MCF 10A (cell line): ENCODE measurements at regions of chr2 and their contacts with region 1.

Region 1: DNA sequence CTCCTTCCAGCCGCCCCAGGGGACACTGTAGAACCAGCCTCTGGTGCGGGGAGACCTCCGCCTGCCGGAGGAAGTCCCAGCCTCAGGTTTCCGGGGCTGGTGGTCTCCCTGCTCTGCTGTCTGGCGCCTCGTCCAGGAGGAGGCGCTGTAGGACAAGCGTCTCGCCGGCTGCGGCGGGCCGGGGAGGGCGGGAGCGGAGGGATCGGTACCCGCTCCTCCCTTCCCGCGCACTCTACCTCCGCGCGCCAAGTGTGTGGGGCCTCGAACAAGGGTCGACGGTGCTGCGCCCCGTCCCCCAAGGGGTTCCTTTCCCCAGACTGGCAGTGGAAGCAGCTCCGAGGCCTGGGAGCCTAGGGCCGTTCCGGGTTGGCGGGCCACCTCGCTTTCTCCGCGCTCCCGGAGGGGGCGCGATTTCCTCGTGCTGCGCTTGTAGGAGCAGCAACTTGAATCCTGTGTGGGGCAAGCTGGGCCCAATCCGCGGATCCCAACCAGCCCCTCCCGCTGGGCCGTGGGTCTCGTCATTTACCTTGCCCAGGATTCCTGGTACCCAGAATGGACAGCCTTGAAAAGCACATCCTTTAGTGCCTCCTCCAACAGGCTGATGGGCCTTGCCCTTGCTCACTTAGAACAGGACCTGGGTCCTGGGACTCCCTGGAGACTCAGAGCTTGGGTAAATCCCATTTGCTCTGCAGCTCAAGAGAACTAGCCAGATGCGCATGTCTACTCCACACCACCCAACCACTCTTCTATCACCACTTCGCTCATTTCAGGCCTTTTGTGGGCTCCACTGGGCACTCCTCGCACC is 10.6 kb upstream of the HOXD4 start:
- DNase-seq: peak; percentile 73
- H3K4me3 Mint-ChIP-seq: peak overlapping the region; percentile 57
- H3K27ac Mint-ChIP-seq: no peak overlapping the region
- H3K4me1 Mint-ChIP-seq: no peaks in the 10 kb centered on the region
- H3K27me3 Mint-ChIP-seq: no peaks in the 10 kb centered on the region
- CTCF ChIP-seq: peak; percentile 96

Region 2: GRCh38 chr2:175647058-175647457 is 493.7 kb before region 1 on chr2:
- CTCF ChIA-PET with region 1: no interaction called
- POLR2A ChIA-PET with region 1: no interaction called
- intact Hi-C with region 1: no loop called
- DNase-seq: no peak
- H3K4me3 Mint-ChIP-seq: no peak overlapping the region
- H3K27ac Mint-ChIP-seq: no peak overlapping the region
- H3K4me1 Mint-ChIP-seq: no peaks in the 10 kb centered on the region
- H3K27me3 Mint-ChIP-seq: no peaks in the 10 kb centered on the region
- CTCF ChIP-seq: no peak

Region 3: GRCh38 chr2:176001916-176002687 is 138.6 kb before region 1 on chr2 and contains the start of gene LNPK:
- CTCF ChIA-PET with region 1: no interaction called
- POLR2A ChIA-PET with region 1: no interaction called
- intact Hi-C with region 1: no loop called
- DNase-seq: peak; percentile 91
- H3K4me3 Mint-ChIP-seq: peak within 1 kb of the TSS; percentile 78
- H3K27ac Mint-ChIP-seq: peak within 1 kb of the TSS; percentile 53
- H3K4me1 Mint-ChIP-seq: peaks cover 9% of the 10 kb centered on the region
- H3K27me3 Mint-ChIP-seq: no peaks in the 10 kb centered on the region
- CTCF ChIP-seq: no peak
- total RNA-seq, gene LNPK: 21.8 and 23.3 TPM in 2 replicates

Region 4: GRCh38 chr2:176107731-176108181 is 33.0 kb before region 1 on chr2:
- CTCF ChIA-PET with region 1: no interaction called
- POLR2A ChIA-PET with region 1: no interaction called
- intact Hi-C with region 1: no loop called
- DNase-seq: no peak
- H3K4me3 Mint-ChIP-seq: no peak overlapping the region
- H3K27ac Mint-ChIP-seq: no peak overlapping the region
- H3K4me1 Mint-ChIP-seq: peaks cover 7% of the 10 kb centered on the region
- H3K27me3 Mint-ChIP-seq: peaks cover 22% of the 10 kb centered on the region
- CTCF ChIP-seq: no peak

Region 5: DNA sequence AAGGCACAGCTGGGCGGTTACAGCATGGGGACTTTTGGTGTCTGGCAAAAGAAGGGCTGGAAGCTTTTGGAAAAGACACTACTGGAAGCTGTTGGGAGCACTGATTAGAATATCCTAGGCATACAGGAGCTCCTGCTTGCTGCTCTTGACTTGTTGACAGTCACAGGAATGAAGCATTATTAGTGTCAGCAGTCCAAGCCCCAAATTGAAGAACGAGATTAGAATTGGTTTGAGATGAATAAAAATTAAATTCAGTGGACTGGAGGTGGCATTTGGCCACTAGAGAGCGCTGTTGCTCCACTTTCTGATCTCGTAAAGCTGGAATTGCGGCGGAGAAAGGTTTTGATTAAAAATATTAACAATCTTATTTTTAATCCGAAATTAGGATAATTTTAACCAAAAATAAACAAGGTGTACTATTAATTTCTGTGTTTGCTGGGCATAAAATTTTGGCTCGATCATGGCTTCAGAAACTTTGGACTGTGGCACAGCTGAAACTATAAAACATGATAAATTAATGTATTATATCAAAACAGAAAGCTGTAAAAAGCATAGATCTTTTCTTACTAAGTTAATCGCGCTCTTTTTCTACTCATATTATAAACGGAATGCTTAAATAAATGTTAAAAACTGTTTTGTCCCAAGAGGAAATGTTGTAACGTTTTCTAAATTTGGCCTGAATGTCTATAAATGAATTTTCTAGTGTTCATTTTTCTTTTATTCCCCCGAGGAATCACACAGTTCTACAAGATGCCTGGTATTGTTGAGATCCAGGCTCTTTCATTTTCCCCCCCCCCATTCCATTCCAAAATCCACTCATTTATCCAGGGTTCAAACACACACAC is 13.6 kb before region 1 on chr2:
- CTCF ChIA-PET with region 1: interaction called, 25 read pairs
- POLR2A ChIA-PET with region 1: no interaction called
- intact Hi-C with region 1: no loop called
- DNase-seq: peak; percentile 63
- H3K4me3 Mint-ChIP-seq: no peak overlapping the region
- H3K27ac Mint-ChIP-seq: no peak overlapping the region
- H3K4me1 Mint-ChIP-seq: no peaks in the 10 kb centered on the region
- H3K27me3 Mint-ChIP-seq: peaks cover 11% of the 10 kb centered on the region
- CTCF ChIP-seq: peak; percentile 76

Region 6: DNA sequence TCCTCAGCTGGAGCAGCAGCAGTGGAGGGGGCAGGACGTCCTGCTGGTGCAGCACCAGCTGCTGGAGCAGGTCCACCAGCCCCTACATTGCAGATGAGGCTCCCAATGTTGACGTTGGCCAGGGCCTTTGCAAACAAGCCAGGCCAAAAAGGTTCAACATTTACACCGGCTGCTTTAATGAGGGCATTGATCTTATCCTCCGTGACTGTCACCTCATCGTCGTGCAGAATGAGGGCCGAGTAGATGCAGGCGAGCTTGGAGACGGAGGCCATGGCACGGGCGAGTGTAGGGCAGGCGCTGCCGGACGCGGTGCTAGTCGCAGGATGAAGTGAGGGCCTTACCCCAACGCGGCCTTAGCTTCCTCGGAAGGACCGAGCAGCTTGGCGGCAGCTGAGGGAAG is 60.3 kb after region 1 on chr2:
- CTCF ChIA-PET with region 1: no interaction called
- POLR2A ChIA-PET with region 1: no interaction called
- intact Hi-C with region 1: no loop called
- DNase-seq: no peak
- H3K4me3 Mint-ChIP-seq: no peak overlapping the region
- H3K27ac Mint-ChIP-seq: no peak overlapping the region
- H3K4me1 Mint-ChIP-seq: no peaks in the 10 kb centered on the region
- H3K27me3 Mint-ChIP-seq: no peaks in the 10 kb centered on the region
- CTCF ChIP-seq: no peak

Region 7: GRCh38 chr2:176317199-176317598 is 176.5 kb after region 1 on chr2:
- CTCF ChIA-PET with region 1: interaction called, 5 read pairs
- POLR2A ChIA-PET with region 1: no interaction called
- intact Hi-C with region 1: loop called (anchors 10 kb)
- DNase-seq: no peak
- H3K4me3 Mint-ChIP-seq: no peak overlapping the region
- H3K27ac Mint-ChIP-seq: no peak overlapping the region
- H3K4me1 Mint-ChIP-seq: no peaks in the 10 kb centered on the region
- H3K27me3 Mint-ChIP-seq: no peaks in the 10 kb centered on the region
- CTCF ChIP-seq: no peak

Region 8: DNA sequence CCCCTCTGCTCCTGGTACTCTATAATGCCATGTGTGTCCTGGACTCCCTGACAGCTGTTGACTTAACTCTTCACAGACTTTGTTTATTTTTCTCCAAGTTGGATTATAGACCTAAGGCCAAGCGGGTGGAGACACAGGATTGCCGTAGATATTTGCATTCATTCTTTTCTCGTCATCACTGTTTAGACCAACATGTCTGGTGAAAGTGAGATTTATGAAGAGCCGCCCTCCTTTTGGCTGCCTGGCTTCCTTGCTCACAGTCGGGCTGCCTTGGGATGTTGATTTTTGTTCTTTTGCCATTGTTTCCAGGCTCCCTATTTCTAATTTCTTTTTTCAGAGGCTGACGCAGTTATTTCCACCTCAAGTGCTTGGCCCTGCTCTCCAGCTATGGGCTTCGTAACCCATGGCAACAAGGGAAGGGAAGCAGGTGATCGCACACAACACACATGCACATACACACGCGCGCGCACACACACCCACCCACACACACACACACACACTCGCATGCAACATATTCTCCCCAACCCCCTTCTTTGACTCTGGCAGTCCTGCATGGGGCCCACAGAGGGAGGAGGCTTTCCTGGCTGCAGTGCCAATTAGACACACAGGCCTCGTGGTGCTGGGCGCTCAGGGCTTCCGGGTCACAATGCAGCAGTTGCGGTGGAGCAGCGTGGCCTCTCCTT is 425.1 kb after region 1 on chr2:
- CTCF ChIA-PET with region 1: interaction called, 83 read pairs
- POLR2A ChIA-PET with region 1: interaction called, 3 read pairs
- intact Hi-C with region 1: no loop called
- DNase-seq: no peak
- H3K4me3 Mint-ChIP-seq: no peak overlapping the region
- H3K27ac Mint-ChIP-seq: no peak overlapping the region
- H3K4me1 Mint-ChIP-seq: peaks cover 11% of the 10 kb centered on the region
- H3K27me3 Mint-ChIP-seq: no peaks in the 10 kb centered on the region
- CTCF ChIP-seq: no peak

Region 9: GRCh38 chr2:176628438-176628837 is 487.7 kb after region 1 on chr2:
- CTCF ChIA-PET with region 1: interaction called, 17 read pairs
- POLR2A ChIA-PET with region 1: no interaction called
- intact Hi-C with region 1: no loop called
- DNase-seq: no peak
- H3K4me3 Mint-ChIP-seq: no peak overlapping the region
- H3K27ac Mint-ChIP-seq: no peak overlapping the region
- H3K4me1 Mint-ChIP-seq: no peaks in the 10 kb centered on the region
- H3K27me3 Mint-ChIP-seq: no peaks in the 10 kb centered on the region
- CTCF ChIP-seq: no peak